ENCODE measurements at regions of chr15 and their contacts with region 1.

Region 1: GRCh38 chr15:74615508-74616365 is at the start of gene CLK3:
- DNase-seq: peak; percentile 97
- ATAC-seq: peak; percentile 88
- H3K4me3 Mint-ChIP-seq: peak within 1 kb of the TSS; percentile 92
- H3K27ac Mint-ChIP-seq: peak within 1 kb of the TSS; percentile 98
- H3K4me1 Mint-ChIP-seq: peaks cover 43% of the 10 kb centered on the region
- H3K27me3 Mint-ChIP-seq: no peaks in the 10 kb centered on the region
- CTCF ChIP-seq: no peak
- total RNA-seq, gene CLK3: 159 to 168 TPM

Region 2: GRCh38 chr15:74540761-74541493 is 74.8 kb before region 1 on chr15 and contains the start of gene ARID3B:
- CTCF ChIA-PET with region 1: interaction called, 15 read pairs
- POLR2A ChIA-PET with region 1: interaction called, 27 read pairs
- intact Hi-C with region 1: loop called (anchors 5 kb)
- DNase-seq: peak; percentile 99
- ATAC-seq: peak; percentile 88
- H3K4me3 Mint-ChIP-seq: peak within 1 kb of the TSS; percentile 98
- H3K27ac Mint-ChIP-seq: peak within 1 kb of the TSS; percentile 99
- H3K4me1 Mint-ChIP-seq: peaks cover 48% of the 10 kb centered on the region
- H3K27me3 Mint-ChIP-seq: no peaks in the 10 kb centered on the region
- CTCF ChIP-seq: no peak
- total RNA-seq, gene ARID3B: 35.2 to 36.2 TPM

Measured in activated CD8-positive, alpha-beta T cell treated with anti-CD3 and anti-CD28 coated beads for 36 hours (primary cell).